ENCODE measurements at regions of chr10 and their contacts with region 1.

Region 1: GRCh38 chr10:100562008-100562711 is 26.4 kb downstream of the HIF1AN start:
- DNase-seq: peak; percentile 74 to 89
- H3K4me3 ChIP-seq: no peak overlapping the region
- H3K4me1 ChIP-seq: no peaks in the 10 kb centered on the region
- H3K27me3 ChIP-seq: peaks cover 9% of the 10 kb centered on the region; the same call in 1 of the 2 replicates

Region 2: DNA sequence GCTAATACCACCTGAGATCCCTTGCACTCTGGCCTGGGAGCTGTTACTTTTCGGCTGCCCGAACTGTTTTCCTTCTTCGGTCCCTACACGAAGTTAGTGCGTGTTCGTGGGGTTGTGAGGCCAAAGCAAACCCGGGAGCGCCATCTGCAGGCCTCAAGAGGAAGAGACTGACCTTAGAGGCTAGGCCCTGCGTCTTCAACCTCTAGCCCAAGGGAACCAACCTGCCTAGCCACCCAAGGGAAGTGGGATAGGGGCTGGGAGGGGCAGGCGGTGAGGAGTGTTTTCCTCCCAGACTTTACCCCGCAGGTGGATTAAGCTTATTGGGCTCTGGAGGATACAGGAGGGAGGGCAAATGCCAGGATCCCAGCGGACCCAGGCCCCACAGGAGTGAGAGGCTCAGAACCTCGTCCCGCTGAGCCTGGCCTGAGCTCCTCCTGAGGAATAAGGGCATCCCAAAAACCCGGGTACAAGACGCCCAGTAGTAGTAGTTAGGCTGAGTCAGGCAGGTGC is 181.5 kb after region 1 on chr10:
- in situ Hi-C with region 1: loop called (anchors 5 kb)
- DNase-seq: peak; percentile 49 to 73
- H3K4me3 ChIP-seq: peak overlapping the region; percentile 38
- H3K4me1 ChIP-seq: no peaks in the 10 kb centered on the region
- H3K27me3 ChIP-seq: peaks cover 90% of the 10 kb centered on the region

Region 3: DNA sequence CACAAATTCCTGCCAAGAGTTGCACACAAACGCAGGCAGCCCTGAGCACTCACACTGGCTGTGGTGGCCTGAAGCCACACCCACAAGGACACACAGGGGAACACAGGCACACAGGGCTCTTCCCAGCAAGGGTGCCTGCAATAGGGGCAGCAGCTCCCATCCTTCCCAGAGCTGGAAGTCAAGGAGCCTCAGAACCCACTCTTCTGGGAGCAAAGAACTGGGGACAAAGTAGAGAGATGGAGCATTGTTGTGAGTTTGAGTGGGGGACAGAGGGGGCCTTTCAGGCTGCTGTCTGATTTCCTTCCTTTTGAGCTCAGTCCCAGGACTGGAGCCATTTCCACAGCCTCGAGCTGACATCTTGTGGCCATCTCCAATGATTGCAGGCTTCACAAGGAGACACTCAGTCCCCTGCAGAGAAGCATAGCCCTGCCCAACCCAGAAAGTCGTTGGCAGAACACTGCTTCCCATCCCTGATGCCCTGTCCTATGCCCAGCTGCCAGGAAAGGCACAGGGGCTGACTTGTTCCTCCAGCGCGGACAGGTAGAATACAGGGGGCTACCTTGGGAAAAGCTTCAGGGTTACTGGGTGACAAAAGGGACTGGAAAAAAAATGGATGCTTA is 316.2 kb after region 1 on chr10:
- in situ Hi-C with region 1: loop called (anchors 5 kb)
- DNase-seq: peak; percentile 74 to 75
- H3K4me3 ChIP-seq: no peak overlapping the region
- H3K4me1 ChIP-seq: no peaks in the 10 kb centered on the region
- H3K27me3 ChIP-seq: no peaks in the 10 kb centered on the region

Region 4: DNA sequence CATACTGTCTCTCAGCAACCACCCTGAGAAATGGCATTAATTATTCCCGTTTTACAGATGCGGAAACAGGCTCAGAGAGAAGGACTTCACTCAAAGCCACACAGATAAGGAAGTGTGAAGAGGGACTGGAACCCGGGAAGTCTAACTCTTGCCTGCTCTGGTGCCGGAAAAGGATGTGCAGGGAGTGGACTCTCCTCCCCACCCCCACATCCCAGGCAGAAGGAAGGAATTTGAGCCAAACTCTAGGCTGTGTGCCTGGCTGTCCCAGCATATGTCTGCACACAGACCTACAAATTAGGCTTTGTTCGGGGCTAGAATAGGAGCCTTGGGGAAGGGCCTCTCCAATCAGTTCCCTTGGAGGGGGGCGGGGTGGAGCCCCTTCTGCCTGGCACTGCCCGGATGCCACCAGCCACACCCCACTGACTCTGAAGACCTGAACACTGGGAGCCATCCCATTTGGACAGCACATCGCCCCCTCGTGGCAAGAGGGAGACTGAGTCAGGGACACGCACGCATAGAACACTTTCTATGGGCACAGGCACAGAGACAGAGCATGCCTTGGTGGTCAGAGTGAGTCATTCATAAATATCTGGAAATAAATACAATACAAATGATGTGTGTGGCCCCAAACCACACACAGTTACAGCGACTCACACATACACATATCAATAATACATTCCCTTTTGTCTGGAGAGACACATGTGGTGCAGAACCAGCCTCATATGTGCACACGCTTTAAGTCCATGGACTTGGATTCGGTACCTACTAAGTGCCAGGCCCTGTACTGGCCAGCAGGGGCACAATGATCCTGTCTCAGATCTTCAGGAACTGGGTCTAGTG is 450.6 kb after region 1 on chr10:
- in situ Hi-C with region 1: loop called (anchors 5 kb)
- DNase-seq: peak; percentile 83 to 92
- H3K4me3 ChIP-seq: no peak overlapping the region
- H3K4me1 ChIP-seq: no peaks in the 10 kb centered on the region
- H3K27me3 ChIP-seq: no peaks in the 10 kb centered on the region

Measured in HAP-1 (cell line).